Aorta (tissue), 5 donors: ENCODE measurements at regions of chr9 and their contacts with region 1.

Region 1: GRCh38 chr9:76143834-76144233 is 250.4 kb downstream of the RFK start:
- DNase-seq: no peak
- ATAC-seq: no peak
- H3K4me3 ChIP-seq: no peak overlapping the region
- H3K27ac ChIP-seq: no peak overlapping the region
- H3K4me1 ChIP-seq: peaks cover 0 to 2% of the 10 kb centered on the region in 2 donors
- H3K27me3 ChIP-seq: no peaks in the 10 kb centered on the region

Region 2: DNA sequence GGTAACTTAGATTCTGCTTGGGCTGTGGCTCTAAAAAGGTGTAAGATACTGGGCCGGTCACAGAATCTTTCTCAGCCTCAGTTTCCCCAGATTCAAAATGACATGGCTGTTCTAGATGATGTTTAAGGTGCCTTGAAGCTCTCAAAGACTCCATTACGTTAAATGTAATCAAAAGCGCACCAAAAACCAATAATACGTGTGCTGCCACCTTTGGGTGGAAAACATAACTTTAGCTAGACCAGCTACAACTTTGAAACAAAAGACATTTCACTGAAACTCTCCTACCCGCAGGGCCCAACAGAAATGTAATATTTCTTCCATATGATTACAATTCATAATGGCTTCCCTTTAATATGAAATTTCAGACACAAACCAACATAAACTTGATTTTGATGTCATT is 288.3 kb before region 1 on chr9:
- intact Hi-C with region 1: no loop called
- DNase-seq: no peak
- ATAC-seq: no peak
- H3K4me3 ChIP-seq: no peak overlapping the region
- H3K27ac ChIP-seq: no peak overlapping the region
- H3K4me1 ChIP-seq: no peaks in the 10 kb centered on the region
- H3K27me3 ChIP-seq: no peaks in the 10 kb centered on the region

Region 3: GRCh38 chr9:76203373-76203772 is 59.5 kb after region 1 on chr9:
- intact Hi-C with region 1: loop called in 1 of 2 experiments (anchors 10 kb)
- DNase-seq: no peak
- ATAC-seq: no peak
- H3K4me3 ChIP-seq: no peak overlapping the region
- H3K27ac ChIP-seq: no peak overlapping the region
- H3K4me1 ChIP-seq: peaks cover 0 to 3% of the 10 kb centered on the region in 2 donors
- H3K27me3 ChIP-seq: no peaks in the 10 kb centered on the region